Thyroid gland (tissue), 4 donors: ENCODE measurements at regions of chr12 and their contacts with region 1.

Region 1: DNA sequence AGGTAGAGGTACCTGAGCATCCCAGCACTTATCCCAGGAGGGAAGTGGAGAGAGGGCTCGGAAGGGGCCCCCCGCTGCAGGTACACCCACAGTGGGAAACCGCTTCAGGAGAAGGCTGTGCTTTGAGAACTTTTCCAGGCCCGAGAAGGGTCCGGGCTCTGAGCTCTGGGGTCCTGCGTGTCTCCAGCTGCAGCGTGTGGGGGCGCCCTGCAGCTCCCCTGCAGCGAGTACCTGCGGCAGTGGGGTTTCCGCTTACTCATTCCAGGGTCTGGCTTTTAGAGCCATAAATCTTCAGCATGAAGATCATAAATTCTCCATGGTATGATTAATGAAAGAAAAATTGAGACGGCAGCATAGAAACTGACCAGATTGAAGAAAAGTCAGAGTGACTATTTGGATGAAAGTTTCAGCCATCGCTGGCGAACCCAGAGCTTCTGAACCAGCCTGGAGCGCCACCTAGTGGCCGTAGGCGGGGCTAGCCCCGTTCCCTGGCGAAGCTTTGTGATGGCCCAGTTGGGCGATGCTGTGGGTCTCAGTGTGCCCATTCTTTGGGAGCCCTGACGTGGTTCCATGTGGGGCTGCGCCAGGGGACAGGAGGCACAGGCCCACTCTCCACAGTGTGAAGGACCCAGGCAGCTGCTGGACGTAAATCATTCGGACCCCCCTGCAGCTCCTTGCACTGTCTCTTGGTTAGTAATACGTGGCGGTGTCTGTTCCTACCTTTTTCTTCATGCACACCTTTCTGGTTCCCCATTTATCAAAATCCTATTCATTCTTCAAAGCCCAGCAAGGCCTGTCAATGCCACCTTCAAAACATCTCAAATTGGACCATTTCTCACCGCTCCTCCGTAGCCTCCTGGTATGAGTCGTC is 198.2 kb downstream of the TSPAN9 start:
- DNase-seq: peak; percentile 75 to 77
- H3K4me3 ChIP-seq: no peak overlapping the region
- H3K27ac ChIP-seq: no peak overlapping the region
- H3K4me1 ChIP-seq: peaks cover 15 to 32% of the 10 kb centered on the region in 2 donors
- H3K27me3 ChIP-seq: no peaks in the 10 kb centered on the region
- CTCF ChIP-seq: peak; percentile 85 to 97 (median 90)
- POLR2A ChIP-seq: no peak

Region 2: GRCh38 chr12:3073438-3074250 is 201.8 kb before region 1 on chr12:
- intact Hi-C with region 1: loop called (anchors 2 kb)
- DNase-seq: peak; percentile 80 to 89
- H3K4me3 ChIP-seq: no peak overlapping the region
- H3K27ac ChIP-seq: no peak overlapping the region
- H3K4me1 ChIP-seq: peaks cover 28 to 38% of the 10 kb centered on the region in 2 donors
- H3K27me3 ChIP-seq: no peaks in the 10 kb centered on the region
- CTCF ChIP-seq: peak; percentile 79 to 97 (median 91)
- POLR2A ChIP-seq: no peak

Region 3: GRCh38 chr12:3214572-3215364 is 60.6 kb before region 1 on chr12:
- intact Hi-C with region 1: loop called (anchors 5 kb)
- DNase-seq: peak; percentile 83 to 85
- H3K4me3 ChIP-seq: no peak overlapping the region
- H3K27ac ChIP-seq: peak overlapping the region in 2 of 3 donors; percentile 42 to 53
- H3K4me1 ChIP-seq: peaks cover 19 to 33% of the 10 kb centered on the region in 2 donors
- H3K27me3 ChIP-seq: no peaks in the 10 kb centered on the region
- CTCF ChIP-seq: peak in 3 of 6 experiments; percentile 25 to 50 (median 47)
- POLR2A ChIP-seq: peak in 1 of 2 donors; percentile 11